Activated T-helper 1 cell treated with anti-CD3 and anti-CD28 coated beads, Interleukin-12 subunit alpha, Interleukin-12 subunit beta, Interleukin-2, Interleukin-4 antibody, amounts not matched to agents 30 ng/mL and 10 ng/mL and 1 ng/mL, durations not matched to agents 14 hours and 24 hours and 36 hours (primary cell): ENCODE measurements at regions of chr13 and their contacts with region 1.

Region 1: DNA sequence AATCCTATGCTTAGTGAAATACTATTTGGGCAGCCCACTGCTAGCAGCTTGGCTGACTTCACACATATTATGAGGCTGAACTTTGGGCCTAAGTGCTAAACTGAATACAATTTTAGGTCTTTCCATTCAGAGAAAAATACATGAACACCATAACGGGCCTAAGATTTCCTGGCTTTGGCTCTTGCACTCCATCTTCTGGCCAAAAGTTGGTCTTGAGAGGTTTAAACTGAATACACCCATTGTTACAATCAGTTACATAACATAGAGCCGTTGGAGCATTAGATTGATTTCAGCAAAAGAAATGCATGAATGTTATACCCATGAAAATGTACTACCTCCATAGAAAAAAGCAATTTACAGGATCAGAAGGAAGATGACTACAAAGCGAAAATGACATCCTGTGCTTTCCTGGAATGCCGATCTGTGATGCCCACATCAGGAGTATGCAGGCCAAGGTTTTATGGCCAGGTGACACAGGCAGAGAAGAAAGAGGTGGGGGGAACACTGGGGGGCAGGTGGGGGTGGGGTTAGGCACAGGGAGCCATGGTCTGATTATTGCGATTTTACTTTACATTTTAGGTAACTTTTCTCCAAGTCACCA is 11.1 kb upstream of the SHISA2 start:
- DNase-seq: peak; percentile 32
- H3K4me3 Mint-ChIP-seq: no peak overlapping the region
- H3K27ac Mint-ChIP-seq: no peak overlapping the region
- H3K4me1 Mint-ChIP-seq: peaks cover 22% of the 10 kb centered on the region
- H3K27me3 Mint-ChIP-seq: peaks cover 12% of the 10 kb centered on the region

Region 2: DNA sequence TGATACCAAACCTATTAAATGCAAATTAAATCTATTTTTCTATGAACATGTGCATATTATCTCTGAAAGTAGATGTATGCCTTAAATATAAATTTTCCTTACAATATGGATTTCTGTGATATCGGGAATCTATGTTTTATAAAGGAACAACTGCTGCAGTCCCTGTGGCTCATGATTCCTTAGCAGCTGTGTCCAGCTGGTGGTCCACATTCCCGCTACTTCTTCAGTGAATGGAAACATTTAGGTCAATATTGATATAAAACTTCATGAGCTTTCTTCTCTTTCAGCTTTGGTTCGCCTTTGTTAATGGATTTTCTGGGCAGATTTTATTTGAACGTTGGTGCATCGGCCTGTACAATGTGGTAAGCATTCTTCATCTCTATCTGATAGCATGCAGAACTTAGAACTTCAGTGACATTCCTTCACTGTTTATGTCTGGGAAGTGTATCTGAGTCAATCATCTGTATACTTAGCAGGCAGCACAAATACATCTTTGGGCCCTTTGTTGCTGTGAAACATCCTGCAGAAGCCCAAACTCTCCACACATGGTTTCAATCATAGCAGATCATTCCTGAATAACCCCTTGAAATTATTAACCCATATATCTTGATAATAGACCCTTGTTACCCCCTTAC is 235.0 kb before region 1 on chr13:
- intact Hi-C with region 1: loop called (anchors 1 kb)
- DNase-seq: no peak
- H3K4me3 Mint-ChIP-seq: no peak overlapping the region
- H3K27ac Mint-ChIP-seq: no peak overlapping the region
- H3K4me1 Mint-ChIP-seq: no peaks in the 10 kb centered on the region
- H3K27me3 Mint-ChIP-seq: no peaks in the 10 kb centered on the region

Region 3: DNA sequence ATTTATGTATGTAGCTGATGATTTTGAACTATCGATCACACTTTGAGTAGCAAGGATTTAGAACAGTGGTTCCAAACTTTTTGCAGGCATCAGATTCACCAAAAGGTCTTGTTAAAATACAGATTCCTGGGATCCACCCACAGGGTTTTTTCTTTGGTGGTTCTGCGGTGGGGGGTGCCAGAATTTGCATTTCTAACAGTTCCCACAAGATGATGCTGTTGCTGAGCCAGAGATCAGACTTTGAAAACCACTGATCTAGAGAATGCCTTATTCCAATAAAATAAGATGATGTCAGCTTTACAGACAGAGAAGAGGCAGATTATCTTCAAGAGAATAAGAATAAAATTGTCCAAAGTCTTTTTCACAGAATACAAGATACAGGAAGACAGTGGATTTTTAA is 69.8 kb after region 1 on chr13:
- intact Hi-C with region 1: no loop called
- DNase-seq: no peak
- H3K4me3 Mint-ChIP-seq: no peak overlapping the region
- H3K27ac Mint-ChIP-seq: no peak overlapping the region
- H3K4me1 Mint-ChIP-seq: no peaks in the 10 kb centered on the region
- H3K27me3 Mint-ChIP-seq: no peaks in the 10 kb centered on the region